ENCODE measurements at regions of chr5 and their contacts with region 1.

Region 1: GRCh38 chr5:151651997-151652645 is 34.6 kb downstream of the SPARC start:
- DNase-seq: peak; percentile 77
- ATAC-seq: peak; percentile 97
- H3K4me3 ChIP-seq: no peak overlapping the region
- H3K4me3 Mint-ChIP-seq: no peak overlapping the region
- H3K27ac ChIP-seq: no peak overlapping the region
- H3K27ac Mint-ChIP-seq: no peak overlapping the region
- H3K4me1 ChIP-seq: no peaks in the 10 kb centered on the region
- H3K4me1 Mint-ChIP-seq: no peaks in the 10 kb centered on the region
- H3K27me3 ChIP-seq: peaks cover 0 to 3% (median 0%) of the 10 kb centered on the region in 4 experiments
- H3K27me3 Mint-ChIP-seq: peaks cover 4% of the 10 kb centered on the region
- CTCF ChIP-seq: peak; percentile 80

Region 2: DNA sequence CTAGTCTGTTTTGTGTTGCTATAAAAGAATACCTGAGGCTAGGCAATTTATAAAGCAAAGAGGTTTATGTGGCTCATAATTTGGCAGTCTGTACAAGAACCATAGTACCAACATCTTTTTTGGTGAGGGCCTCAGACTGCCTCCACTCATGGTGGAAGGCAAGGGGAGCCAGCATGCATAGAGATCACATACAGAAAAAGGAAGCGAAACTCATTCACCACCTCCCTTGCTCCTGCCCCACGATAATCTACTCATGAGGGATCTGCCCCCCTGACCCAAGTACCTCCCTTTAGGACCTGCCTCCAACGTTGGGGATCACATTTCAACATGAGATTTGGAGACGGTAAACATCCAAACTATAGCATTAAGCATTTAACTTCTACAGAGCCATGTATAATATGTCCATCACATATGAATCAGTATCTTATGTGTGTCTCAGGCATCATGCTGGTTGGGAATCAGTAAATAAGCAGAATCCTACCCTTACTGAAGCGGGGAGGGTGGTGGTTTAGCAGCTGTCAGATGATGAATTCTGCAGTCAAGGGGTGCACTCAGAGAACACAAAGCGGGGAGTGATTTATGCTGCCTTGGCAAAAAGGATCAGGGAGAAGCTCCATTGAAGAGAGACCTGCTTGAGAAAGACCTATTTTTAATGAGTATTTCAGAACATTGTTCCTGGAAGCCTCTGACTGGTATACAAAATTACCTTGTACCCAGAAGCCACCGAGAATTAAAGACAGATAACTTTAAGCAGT is 1616.8 kb before region 1 on chr5:
- CTCF ChIA-PET with region 1: no interaction called
- POLR2A ChIA-PET with region 1: no interaction called
- intact Hi-C with region 1: no loop called
- DNase-seq: peak; percentile 45
- ATAC-seq: peak; percentile 84
- H3K4me3 ChIP-seq: no peak overlapping the region
- H3K4me3 Mint-ChIP-seq: no peak overlapping the region
- H3K27ac ChIP-seq: no peak overlapping the region
- H3K27ac Mint-ChIP-seq: no peak overlapping the region
- H3K4me1 ChIP-seq: peaks cover 2 to 6% of the 10 kb centered on the region in 2 donors
- H3K4me1 Mint-ChIP-seq: peaks cover 13% of the 10 kb centered on the region
- H3K27me3 ChIP-seq: no peaks in the 10 kb centered on the region
- H3K27me3 Mint-ChIP-seq: no peaks in the 10 kb centered on the region
- CTCF ChIP-seq: no peak

Region 3: GRCh38 chr5:151523335-151523734 is 128.8 kb before region 1 on chr5:
- CTCF ChIA-PET with region 1: interaction called, 18 read pairs
- POLR2A ChIA-PET with region 1: no interaction called
- intact Hi-C with region 1: loop called (anchors 5 kb)
- DNase-seq: peak; percentile 60
- ATAC-seq: peak; percentile 61
- H3K4me3 ChIP-seq: no peak overlapping the region
- H3K4me3 Mint-ChIP-seq: no peak overlapping the region
- H3K27ac ChIP-seq: no peak overlapping the region
- H3K27ac Mint-ChIP-seq: no peak overlapping the region
- H3K4me1 ChIP-seq: no peaks in the 10 kb centered on the region
- H3K4me1 Mint-ChIP-seq: no peaks in the 10 kb centered on the region
- H3K27me3 ChIP-seq: peaks cover 0 to 6% (median 0%) of the 10 kb centered on the region in 4 experiments
- H3K27me3 Mint-ChIP-seq: peaks cover 3% of the 10 kb centered on the region
- CTCF ChIP-seq: peak; percentile 60

Region 4: GRCh38 chr5:151686674-151687407 is 34.7 kb after region 1 on chr5 and contains the start of gene SPARC:
- CTCF ChIA-PET with region 1: no interaction called
- POLR2A ChIA-PET with region 1: no interaction called
- intact Hi-C with region 1: no loop called
- DNase-seq: no peak
- ATAC-seq: no peak
- H3K4me3 ChIP-seq: no peak within 1 kb of the TSS
- H3K4me3 Mint-ChIP-seq: peak within 1 kb of the TSS; percentile 12
- H3K27ac ChIP-seq: no peak within 1 kb of the TSS
- H3K27ac Mint-ChIP-seq: no peak within 1 kb of the TSS
- H3K4me1 ChIP-seq: peaks cover 3 to 7% of the 10 kb centered on the region in 2 donors
- H3K4me1 Mint-ChIP-seq: peaks cover 8% of the 10 kb centered on the region
- H3K27me3 ChIP-seq: peaks cover 0 to 22% (median 11%) of the 10 kb centered on the region in 4 experiments
- H3K27me3 Mint-ChIP-seq: peaks cover 31% of the 10 kb centered on the region
- CTCF ChIP-seq: no peak
- total RNA-seq, gene SPARC: not detected in 2 replicates